Ovary (tissue), 10 donors: ENCODE measurements at regions of chr3 and their contacts with region 1.

Region 1: GRCh38 chr3:11711876-11712275 is 68.2 kb upstream of the VGLL4 start:
- DNase-seq: no peak
- H3K4me3 ChIP-seq: no peak overlapping the region
- H3K27ac ChIP-seq: no peak overlapping the region
- H3K4me1 ChIP-seq: peaks cover 1% of the 10 kb centered on the region
- H3K27me3 ChIP-seq: no peaks in the 10 kb centered on the region
- CTCF ChIP-seq: no peak
- EP300 ChIP-seq: no peak
- POLR2A ChIP-seq: no peak

Region 2: GRCh38 chr3:11699083-11699427 is 12.8 kb before region 1 on chr3:
- intact Hi-C with region 1: loop called in 1 of 4 experiments (anchors 2 kb)
- DNase-seq: no peak
- H3K4me3 ChIP-seq: no peak overlapping the region
- H3K27ac ChIP-seq: no peak overlapping the region
- H3K4me1 ChIP-seq: no peaks in the 10 kb centered on the region
- H3K27me3 ChIP-seq: no peaks in the 10 kb centered on the region
- CTCF ChIP-seq: no peak
- EP300 ChIP-seq: no peak
- POLR2A ChIP-seq: no peak